Mammary epithelial cell (primary cell): ENCODE measurements at regions of chr10 and their contacts with region 1.

Region 1: DNA sequence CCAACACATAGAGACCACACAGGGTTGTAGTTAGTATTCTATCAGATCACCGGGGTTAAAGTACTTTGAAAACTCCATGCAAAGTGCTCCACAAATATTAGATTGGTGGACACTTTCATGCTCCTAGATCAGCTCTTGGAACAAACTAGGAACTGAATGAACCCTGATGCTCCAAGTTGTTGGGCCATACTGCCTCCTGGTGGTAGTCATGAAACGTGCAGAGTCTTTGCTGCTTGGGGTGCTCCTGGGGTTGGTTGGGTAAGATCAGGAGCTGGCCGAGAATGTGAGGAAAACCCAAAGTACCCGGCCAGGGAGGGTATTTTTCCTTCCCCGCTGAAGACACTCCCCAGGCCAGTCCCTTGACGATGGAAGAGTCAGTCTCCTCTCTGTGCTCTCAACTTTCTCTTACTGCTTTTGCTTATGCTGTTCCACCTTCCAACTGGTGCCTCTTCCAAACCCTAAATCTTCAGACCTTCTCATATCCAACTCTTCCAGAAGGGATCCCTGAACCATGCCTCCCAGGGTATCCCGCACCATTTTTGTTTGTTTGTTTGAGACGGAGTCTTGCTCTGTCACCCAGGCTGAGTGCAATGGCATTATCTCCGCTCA is 920 bp upstream of the RPEL1 start:
- DNase-seq: peak; percentile 68
- H3K4me3 ChIP-seq: no peak overlapping the region
- H3K27ac ChIP-seq: no peak overlapping the region
- H3K4me1 ChIP-seq: peaks cover 20% of the 10 kb centered on the region
- H3K27me3 ChIP-seq: no peaks in the 10 kb centered on the region
- CTCF ChIP-seq: peak; percentile 96 to 99

Region 2: DNA sequence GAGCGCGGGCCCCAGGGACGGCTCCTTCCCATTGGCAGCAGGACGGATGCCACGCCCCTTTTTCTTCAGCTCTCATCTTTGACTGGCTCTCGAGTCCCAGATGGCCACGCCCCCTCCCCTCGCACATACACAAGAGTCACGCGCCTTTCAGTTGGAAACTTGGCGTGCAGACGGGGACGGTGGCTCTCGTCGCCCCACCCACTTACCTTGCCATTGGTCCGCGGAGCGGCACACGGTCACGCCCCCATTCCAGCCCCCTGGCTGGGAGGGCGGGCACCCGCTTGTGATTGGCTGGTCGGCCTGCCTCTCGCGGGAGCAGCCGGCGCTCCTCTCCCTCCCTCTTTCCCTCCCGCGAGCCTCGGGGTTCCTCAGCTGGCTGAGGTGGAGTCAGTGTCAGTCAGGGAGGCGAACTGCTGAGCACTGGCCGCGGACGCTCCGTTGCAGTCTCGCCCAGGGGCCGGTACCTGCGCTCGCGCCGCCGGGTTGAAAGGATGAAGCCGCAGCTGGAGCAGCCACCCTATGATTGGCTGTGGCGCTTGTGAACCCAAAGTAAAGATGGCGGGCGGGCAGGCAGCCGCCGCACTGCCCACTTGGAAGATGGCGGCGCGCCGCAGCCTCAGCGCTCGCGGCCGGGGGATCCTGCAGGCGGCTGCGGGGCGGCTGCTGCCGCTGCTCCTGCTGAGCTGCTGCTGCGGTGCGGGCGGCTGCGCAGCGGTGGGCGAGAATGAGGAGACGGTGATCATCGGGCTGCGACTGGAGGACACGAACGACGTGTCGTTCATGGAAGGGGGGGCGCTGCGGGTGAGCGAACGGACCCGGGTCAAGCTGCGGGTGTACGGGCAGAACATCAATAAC is 326.6 kb before region 1 on chr10 and contains the start of gene CNNM2:
- CTCF ChIA-PET with region 1: interaction called, 11 read pairs
- dilution Hi-C with region 1: no loop called
- in situ Hi-C with region 1: loop called (anchors 10 to 25 kb)
- intact Hi-C with region 1: loop called (anchors 1 kb)
- DNase-seq: peak; percentile 99
- H3K4me3 ChIP-seq: peak within 1 kb of the TSS; percentile 91 to 99 (median 91)
- H3K27ac ChIP-seq: peak within 1 kb of the TSS; percentile 54
- H3K4me1 ChIP-seq: peaks cover 13% of the 10 kb centered on the region
- H3K27me3 ChIP-seq: no peaks in the 10 kb centered on the region
- CTCF ChIP-seq: no peak
- total RNA-seq, gene CNNM2: 4.5 to 5.5 TPM

Region 3: DNA sequence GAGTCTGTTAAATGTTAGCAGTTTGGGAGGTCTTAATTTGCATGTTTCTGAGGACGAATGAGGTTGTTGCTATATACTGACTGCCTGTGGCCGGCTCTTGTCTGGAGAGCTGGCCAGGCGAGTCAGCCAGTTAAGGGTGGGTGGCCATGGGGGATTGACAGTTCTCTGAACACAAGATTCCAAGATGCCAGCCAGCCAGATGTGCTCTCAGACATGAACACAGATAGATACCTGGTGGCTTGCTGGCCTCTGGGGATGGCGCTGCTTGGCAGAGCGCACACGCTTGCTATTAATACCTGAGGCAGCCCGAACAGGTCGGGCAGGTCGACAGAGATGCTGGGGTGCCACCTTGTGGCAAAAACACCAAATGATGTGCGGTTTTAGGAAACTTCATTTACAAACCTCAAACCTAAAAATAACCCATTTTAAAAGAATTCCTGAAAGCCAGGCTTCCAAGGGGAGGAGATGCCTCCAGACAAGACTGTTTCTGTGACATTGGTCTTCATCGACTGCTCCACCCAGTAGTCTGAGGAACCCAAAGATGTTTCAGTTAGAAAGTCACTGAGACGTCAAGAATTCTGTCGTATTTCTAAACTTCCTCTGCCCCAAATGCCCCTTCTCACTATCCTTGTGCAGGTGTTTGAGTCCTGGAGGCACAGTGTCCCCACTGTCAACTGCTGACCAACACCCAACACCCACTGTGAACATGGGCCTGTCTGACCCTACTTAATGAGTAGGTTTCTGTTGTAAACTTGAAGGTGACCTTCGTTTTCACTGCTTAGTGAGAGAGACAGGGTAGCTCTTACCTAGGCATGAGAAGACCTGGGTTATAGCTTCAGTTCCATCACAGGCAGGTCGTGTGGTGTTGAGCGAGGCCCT is 175.1 kb before region 1 on chr10:
- CTCF ChIA-PET with region 1: no interaction called
- dilution Hi-C with region 1: no loop called
- in situ Hi-C with region 1: no loop called
- intact Hi-C with region 1: loop called (anchors 1 kb)
- DNase-seq: peak; percentile 48
- H3K4me3 ChIP-seq: no peak overlapping the region
- H3K27ac ChIP-seq: no peak overlapping the region
- H3K4me1 ChIP-seq: no peaks in the 10 kb centered on the region
- H3K27me3 ChIP-seq: no peaks in the 10 kb centered on the region
- CTCF ChIP-seq: peak; percentile 68 to 73

Region 4: GRCh38 chr10:103120977-103121735 is 123.6 kb before region 1 on chr10:
- CTCF ChIA-PET with region 1: no interaction called
- dilution Hi-C with region 1: no loop called
- in situ Hi-C with region 1: no loop called
- intact Hi-C with region 1: loop called (anchors 5 kb)
- DNase-seq: no peak
- H3K4me3 ChIP-seq: no peak overlapping the region
- H3K27ac ChIP-seq: no peak overlapping the region
- H3K4me1 ChIP-seq: no peaks in the 10 kb centered on the region
- H3K27me3 ChIP-seq: no peaks in the 10 kb centered on the region
- CTCF ChIP-seq: no peak

Region 5: GRCh38 chr10:103231047-103231551 is 13.7 kb before region 1 on chr10:
- CTCF ChIA-PET with region 1: interaction called, 17 read pairs
- dilution Hi-C with region 1: no loop called
- in situ Hi-C with region 1: no loop called
- intact Hi-C with region 1: no loop called
- DNase-seq: peak; percentile 84
- H3K4me3 ChIP-seq: no peak overlapping the region
- H3K27ac ChIP-seq: peak overlapping the region; percentile 71
- H3K4me1 ChIP-seq: peaks cover 42% of the 10 kb centered on the region
- H3K27me3 ChIP-seq: no peaks in the 10 kb centered on the region
- CTCF ChIP-seq: no peak

Region 6: GRCh38 chr10:103481974-103482531 is 237.3 kb after region 1 on chr10:
- CTCF ChIA-PET with region 1: no interaction called
- dilution Hi-C with region 1: no loop called
- in situ Hi-C with region 1: no loop called
- intact Hi-C with region 1: loop called (anchors 5 kb)
- DNase-seq: peak; percentile 42
- H3K4me3 ChIP-seq: no peak overlapping the region
- H3K27ac ChIP-seq: no peak overlapping the region
- H3K4me1 ChIP-seq: peaks cover 14% of the 10 kb centered on the region
- H3K27me3 ChIP-seq: no peaks in the 10 kb centered on the region
- CTCF ChIP-seq: peak; percentile 72 to 86

Region 7: DNA sequence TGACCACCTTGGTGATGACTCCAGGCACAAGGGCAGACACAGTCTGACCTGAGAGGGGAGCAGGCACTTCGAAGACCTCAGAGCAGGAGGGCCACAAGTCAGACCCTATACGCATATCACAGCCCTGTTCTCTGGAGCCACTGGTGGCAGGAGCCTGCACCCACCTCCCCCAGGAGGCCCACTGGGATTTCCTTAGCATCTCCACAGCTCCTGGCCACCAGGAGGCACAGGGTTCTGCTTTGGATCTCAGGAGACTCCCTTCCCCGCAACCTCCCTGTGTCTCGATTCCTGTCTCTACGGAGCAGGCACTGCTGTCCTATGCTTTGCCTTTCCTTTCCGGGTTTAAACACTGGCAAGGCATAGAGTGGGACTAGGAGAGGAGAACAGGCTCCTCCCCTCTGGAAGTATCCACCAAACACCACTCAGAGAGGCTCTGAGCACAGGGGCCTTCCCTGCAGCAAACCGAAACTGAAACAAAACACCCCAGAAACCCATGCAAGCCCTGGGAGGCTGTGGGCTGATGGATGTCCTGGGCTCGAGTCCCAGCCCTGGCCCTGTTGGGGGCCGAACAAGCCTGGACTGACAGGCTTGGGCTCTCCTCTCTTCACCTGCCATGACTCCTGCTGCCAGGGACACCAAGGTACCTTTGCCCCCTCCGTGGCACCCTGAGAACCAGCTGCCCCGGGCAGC is 415.1 kb after region 1 on chr10:
- CTCF ChIA-PET with region 1: no interaction called
- dilution Hi-C with region 1: no loop called
- in situ Hi-C with region 1: no loop called
- intact Hi-C with region 1: no loop called
- DNase-seq: peak; percentile 78
- H3K4me3 ChIP-seq: peak overlapping the region in 2 of 3 experiments; percentile 27 to 37
- H3K27ac ChIP-seq: peak overlapping the region; percentile 36
- H3K4me1 ChIP-seq: peaks cover 48% of the 10 kb centered on the region
- H3K27me3 ChIP-seq: no peaks in the 10 kb centered on the region
- CTCF ChIP-seq: peak in 1 of 2 donors; percentile 12